ENCODE measurements at regions of chr6 and their contacts with region 1.

Region 1: DNA sequence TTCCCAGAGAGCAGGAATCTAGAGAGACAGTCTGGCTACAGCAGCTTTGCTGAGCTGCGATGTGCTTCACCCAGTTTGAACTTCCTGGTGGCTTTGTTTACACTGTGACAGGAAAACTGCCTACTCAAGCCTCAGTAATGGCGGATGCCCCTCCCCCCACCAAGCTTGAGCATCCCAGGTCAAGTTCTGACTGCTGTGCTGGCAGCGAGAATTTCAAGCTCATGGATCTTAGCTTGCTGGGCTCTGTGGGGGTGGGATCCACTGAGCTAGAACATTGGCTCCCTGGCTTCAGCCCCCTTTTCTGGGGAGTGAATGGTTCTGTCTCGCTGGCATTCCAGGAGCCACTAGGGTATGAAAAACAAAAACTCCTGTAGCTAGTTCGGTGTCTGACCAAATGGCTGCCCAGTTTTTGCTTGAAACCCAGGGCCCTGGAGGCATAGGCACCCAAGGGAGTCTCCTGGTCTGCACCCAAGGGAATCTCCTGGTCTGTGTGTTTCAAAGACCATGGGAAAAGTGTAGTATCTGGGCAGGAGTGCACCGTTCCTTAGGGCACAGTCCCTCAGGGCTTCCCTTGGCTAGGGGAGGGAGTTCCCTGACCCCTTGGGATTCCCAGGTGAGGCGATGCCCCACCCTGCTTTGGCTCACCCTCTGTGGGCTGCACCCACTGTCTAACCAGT is 90.8 kb upstream of the ESR1 start:
- DNase-seq: peak; percentile 66
- ATAC-seq: peak; percentile 72
- H3K4me3 ChIP-seq: peak overlapping the region in 1 of 3 experiments; percentile 40; a peak in 1 of 6 replicates
- H3K27ac ChIP-seq: no peak overlapping the region
- H3K4me1 ChIP-seq: peaks cover 17% of the 10 kb centered on the region
- H3K27me3 ChIP-seq: no peaks in the 10 kb centered on the region
- CTCF ChIP-seq: no peak
- EP300 ChIP-seq: peak in 1 of 2 experiments; percentile 25; a peak in 1 of 4 replicates
- POLR2A ChIP-seq: no peak
- RAD21 ChIP-seq: no peak

Region 2: GRCh38 chr6:151729829-151730495 is 13.3 kb after region 1 on chr6:
- CTCF ChIA-PET with region 1: no interaction called
- POLR2A ChIA-PET with region 1: no interaction called
- in situ Hi-C with region 1: no loop called
- intact Hi-C with region 1: no loop called
- DNase-seq: no peak
- ATAC-seq: peak; percentile 70
- H3K4me3 ChIP-seq: no peak overlapping the region
- H3K27ac ChIP-seq: no peak overlapping the region
- H3K4me1 ChIP-seq: no peaks in the 10 kb centered on the region
- H3K27me3 ChIP-seq: peaks cover 0 to 1% of the 10 kb centered on the region in 2 experiments; a peak in 1 of 5 replicates
- CTCF ChIP-seq: 0 out of 2 replicates have a peak, but pooled peaks have one; percentile 6
- EP300 ChIP-seq: no peak
- POLR2A ChIP-seq: no peak
- RAD21 ChIP-seq: no peak

Region 3: GRCh38 chr6:151773382-151773781 is 56.7 kb after region 1 on chr6:
- CTCF ChIA-PET with region 1: no interaction called
- POLR2A ChIA-PET with region 1: no interaction called
- in situ Hi-C with region 1: no loop called
- intact Hi-C with region 1: no loop called
- DNase-seq: peak; percentile 14
- ATAC-seq: no peak
- H3K4me3 ChIP-seq: no peak overlapping the region
- H3K27ac ChIP-seq: no peak overlapping the region
- H3K4me1 ChIP-seq: no peaks in the 10 kb centered on the region
- H3K27me3 ChIP-seq: no peaks in the 10 kb centered on the region; a peak in 2 of 5 replicates
- CTCF ChIP-seq: no peak
- EP300 ChIP-seq: no peak
- POLR2A ChIP-seq: no peak
- RAD21 ChIP-seq: no peak

Region 4: DNA sequence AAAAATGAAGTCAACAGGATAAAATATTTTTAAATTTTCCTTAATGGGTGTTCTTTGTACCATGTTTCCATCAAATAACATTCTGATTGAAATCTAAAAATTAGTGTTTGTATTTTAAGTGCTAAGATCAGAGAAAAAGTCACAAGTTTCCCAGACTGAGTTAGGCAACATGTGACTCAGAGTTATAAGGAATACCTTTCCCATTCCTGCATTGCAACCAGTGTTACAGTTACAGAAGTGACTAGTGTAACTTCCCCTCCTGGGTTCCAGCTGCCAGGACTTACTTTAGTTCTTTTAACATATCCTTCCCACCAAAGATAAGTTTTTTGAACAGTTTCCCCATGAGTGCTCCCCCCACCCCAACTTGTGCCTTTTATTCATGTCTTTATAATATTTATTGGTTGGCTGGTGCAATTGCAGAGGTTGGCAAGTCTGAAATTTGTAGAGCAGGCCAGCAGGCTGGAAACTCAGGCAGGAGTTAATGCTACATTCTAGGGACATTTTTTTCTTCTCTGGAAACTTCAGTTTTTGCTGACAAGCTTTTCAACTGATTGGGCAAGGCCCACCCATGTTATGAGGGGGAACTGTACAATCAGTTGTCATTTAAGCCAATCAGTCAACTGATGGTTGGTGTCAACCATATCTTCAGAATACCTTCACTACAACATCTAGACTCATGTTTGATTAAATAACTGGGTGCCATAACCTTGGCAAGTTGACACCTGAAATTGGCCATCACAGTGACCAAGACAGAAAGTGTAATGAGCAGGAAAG is 68.0 kb after region 1 on chr6:
- CTCF ChIA-PET with region 1: no interaction called
- POLR2A ChIA-PET with region 1: no interaction called
- in situ Hi-C with region 1: no loop called
- intact Hi-C with region 1: no loop called
- DNase-seq: no peak
- ATAC-seq: no peak
- H3K4me3 ChIP-seq: no peak overlapping the region
- H3K27ac ChIP-seq: no peak overlapping the region
- H3K4me1 ChIP-seq: no peaks in the 10 kb centered on the region
- H3K27me3 ChIP-seq: no peaks in the 10 kb centered on the region
- CTCF ChIP-seq: no peak
- EP300 ChIP-seq: no peak
- POLR2A ChIP-seq: no peak
- RAD21 ChIP-seq: no peak

Region 5: GRCh38 chr6:151842816-151843215 is 126.2 kb after region 1 on chr6:
- CTCF ChIA-PET with region 1: no interaction called
- POLR2A ChIA-PET with region 1: no interaction called
- in situ Hi-C with region 1: no loop called
- intact Hi-C with region 1: loop called (anchors 1 kb)
- DNase-seq: no peak
- ATAC-seq: no peak
- H3K4me3 ChIP-seq: no peak overlapping the region
- H3K27ac ChIP-seq: no peak overlapping the region
- H3K4me1 ChIP-seq: no peaks in the 10 kb centered on the region
- H3K27me3 ChIP-seq: no peaks in the 10 kb centered on the region
- CTCF ChIP-seq: no peak
- EP300 ChIP-seq: no peak
- POLR2A ChIP-seq: no peak
- RAD21 ChIP-seq: no peak

Measured in HepG2 (cell line).